ENCODE measurements at regions of chr1 and their contacts with region 1.

Region 1: GRCh38 chr1:117758444-117759316 is 152.8 kb downstream of the TENT5C start:
- DNase-seq: peak; percentile 75 to 81
- H3K4me3 ChIP-seq: no peak overlapping the region
- H3K4me3 Mint-ChIP-seq: peak overlapping the region; percentile 55
- H3K27ac Mint-ChIP-seq: peak overlapping the region; percentile 50
- H3K4me1 ChIP-seq: peaks cover 22% of the 10 kb centered on the region
- H3K4me1 Mint-ChIP-seq: peaks cover 34% of the 10 kb centered on the region
- H3K27me3 ChIP-seq: no peaks in the 10 kb centered on the region
- H3K27me3 Mint-ChIP-seq: no peaks in the 10 kb centered on the region
- CTCF ChIP-seq: peak; percentile 51 to 57

Region 2: GRCh38 chr1:117512743-117513321 is 245.8 kb before region 1 on chr1:
- CTCF ChIA-PET with region 1: interaction called, 4 read pairs
- POLR2A ChIA-PET with region 1: no interaction called
- intact Hi-C with region 1: loop called (anchors 1 kb)
- DNase-seq: peak in 1 of 2 experiments; percentile 19
- H3K4me3 ChIP-seq: no peak overlapping the region
- H3K4me3 Mint-ChIP-seq: no peak overlapping the region
- H3K27ac Mint-ChIP-seq: no peak overlapping the region
- H3K4me1 ChIP-seq: no peaks in the 10 kb centered on the region
- H3K4me1 Mint-ChIP-seq: no peaks in the 10 kb centered on the region
- H3K27me3 ChIP-seq: no peaks in the 10 kb centered on the region
- H3K27me3 Mint-ChIP-seq: no peaks in the 10 kb centered on the region
- CTCF ChIP-seq: peak; percentile 22 to 44

Region 3: DNA sequence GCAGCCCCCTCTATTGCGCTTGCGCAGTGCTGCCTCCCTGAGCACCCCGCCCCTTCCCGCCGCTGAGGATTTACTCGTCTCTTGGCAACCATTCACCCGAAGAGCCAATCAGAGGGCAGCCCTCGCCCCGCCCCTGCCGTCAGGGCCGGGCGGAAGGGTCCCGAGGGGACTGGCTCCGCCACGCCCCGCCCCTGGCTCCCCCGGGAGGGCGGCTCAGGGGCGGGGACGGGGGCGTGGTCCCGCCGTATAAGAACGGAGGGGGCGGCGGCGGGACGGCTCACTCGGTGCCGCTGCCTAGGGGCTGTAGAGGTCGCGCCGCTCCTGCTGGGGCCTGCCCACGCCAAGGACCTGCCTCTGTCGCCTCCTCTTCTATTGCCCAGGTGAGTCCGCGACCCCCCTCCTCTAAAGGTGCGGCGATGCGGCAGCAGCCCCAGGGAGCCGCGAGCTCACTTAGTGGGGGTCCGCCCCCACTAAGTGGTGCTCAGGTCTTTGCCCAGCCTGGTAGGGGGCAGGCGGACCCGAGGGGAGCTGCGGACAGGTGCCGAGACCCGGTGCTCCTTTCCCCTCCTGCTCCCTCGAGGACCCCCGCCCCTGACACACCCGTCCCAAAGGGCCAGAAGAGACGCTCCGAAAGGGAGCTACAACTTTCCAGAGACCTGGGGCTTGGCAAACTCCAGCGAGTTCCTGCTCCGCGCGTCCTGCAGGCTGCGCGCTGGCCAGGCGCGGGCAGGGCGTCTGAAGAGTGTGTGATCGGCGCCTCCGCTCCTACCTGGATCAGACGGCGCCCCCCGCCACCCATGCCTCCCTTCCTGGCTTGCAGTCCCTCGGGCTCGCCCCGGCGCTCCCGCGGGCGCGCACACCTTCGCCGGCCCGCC is 152.7 kb before region 1 on chr1 and contains the start of gene TENT5C:
- CTCF ChIA-PET with region 1: interaction called, 3 read pairs
- POLR2A ChIA-PET with region 1: no interaction called
- intact Hi-C with region 1: loop called (anchors 1 kb)
- DNase-seq: peak; percentile 95
- H3K4me3 ChIP-seq: peak within 1 kb of the TSS; percentile 78
- H3K4me3 Mint-ChIP-seq: peak within 1 kb of the TSS; percentile 86
- H3K27ac Mint-ChIP-seq: peak within 1 kb of the TSS; percentile 69
- H3K4me1 ChIP-seq: no peaks in the 10 kb centered on the region
- H3K4me1 Mint-ChIP-seq: peaks cover 22% of the 10 kb centered on the region
- H3K27me3 ChIP-seq: no peaks in the 10 kb centered on the region
- H3K27me3 Mint-ChIP-seq: no peaks in the 10 kb centered on the region
- CTCF ChIP-seq: peak in 1 of 2 experiments; percentile 2
- total RNA-seq, gene TENT5C: 19.8 and 24.4 TPM in 2 replicates

Region 4: DNA sequence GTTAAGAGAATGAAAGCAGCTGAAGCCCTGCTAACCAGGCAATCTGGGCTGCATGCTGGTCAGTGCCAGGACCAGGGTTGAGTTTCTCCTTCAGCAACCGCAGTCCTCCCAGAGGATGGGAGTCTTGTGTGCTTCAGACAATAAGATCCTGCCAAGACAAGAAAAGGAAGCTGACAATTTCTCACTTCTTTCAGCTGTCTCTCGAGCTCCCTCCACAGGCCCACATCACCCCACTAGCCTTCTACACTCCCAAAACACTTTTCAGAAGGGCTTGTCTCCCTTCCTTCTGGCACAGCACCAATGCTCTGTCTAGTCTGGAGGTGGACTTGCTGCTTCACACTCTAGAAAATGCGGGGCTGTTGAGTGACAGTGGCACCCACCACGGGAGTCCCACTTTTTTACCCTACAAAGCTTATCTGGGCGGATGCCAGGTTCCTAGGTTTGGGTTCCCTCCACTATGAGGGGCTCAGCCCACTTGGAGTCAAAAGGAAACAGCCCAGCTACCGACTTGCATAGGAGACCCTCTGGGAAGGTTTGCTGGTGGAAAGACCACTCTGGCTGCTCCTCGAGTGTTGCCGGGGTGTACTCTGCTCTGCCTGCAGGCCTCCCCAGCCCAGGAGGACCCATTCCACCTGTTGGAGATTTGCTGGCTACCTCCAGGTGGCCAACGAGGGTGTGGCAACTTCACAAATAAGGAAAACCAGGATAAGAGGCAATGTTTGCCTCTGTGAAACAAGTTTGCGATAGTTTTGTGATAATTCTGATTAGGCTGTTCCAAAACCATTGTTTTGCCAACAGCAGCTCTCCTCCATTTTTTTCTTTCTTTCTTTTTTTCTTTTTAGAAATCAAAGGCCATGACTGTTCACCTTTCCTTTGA is 83.9 kb before region 1 on chr1:
- CTCF ChIA-PET with region 1: interaction called, 17 read pairs
- POLR2A ChIA-PET with region 1: interaction called, 3 read pairs
- intact Hi-C with region 1: loop called (anchors 1 kb)
- DNase-seq: peak; percentile 65 to 69
- H3K4me3 ChIP-seq: no peak overlapping the region
- H3K4me3 Mint-ChIP-seq: no peak overlapping the region
- H3K27ac Mint-ChIP-seq: peak overlapping the region; percentile 83
- H3K4me1 ChIP-seq: peaks cover 40% of the 10 kb centered on the region
- H3K4me1 Mint-ChIP-seq: peaks cover 18% of the 10 kb centered on the region
- H3K27me3 ChIP-seq: no peaks in the 10 kb centered on the region
- H3K27me3 Mint-ChIP-seq: no peaks in the 10 kb centered on the region
- CTCF ChIP-seq: peak in 1 of 2 experiments; percentile 16

Region 5: DNA sequence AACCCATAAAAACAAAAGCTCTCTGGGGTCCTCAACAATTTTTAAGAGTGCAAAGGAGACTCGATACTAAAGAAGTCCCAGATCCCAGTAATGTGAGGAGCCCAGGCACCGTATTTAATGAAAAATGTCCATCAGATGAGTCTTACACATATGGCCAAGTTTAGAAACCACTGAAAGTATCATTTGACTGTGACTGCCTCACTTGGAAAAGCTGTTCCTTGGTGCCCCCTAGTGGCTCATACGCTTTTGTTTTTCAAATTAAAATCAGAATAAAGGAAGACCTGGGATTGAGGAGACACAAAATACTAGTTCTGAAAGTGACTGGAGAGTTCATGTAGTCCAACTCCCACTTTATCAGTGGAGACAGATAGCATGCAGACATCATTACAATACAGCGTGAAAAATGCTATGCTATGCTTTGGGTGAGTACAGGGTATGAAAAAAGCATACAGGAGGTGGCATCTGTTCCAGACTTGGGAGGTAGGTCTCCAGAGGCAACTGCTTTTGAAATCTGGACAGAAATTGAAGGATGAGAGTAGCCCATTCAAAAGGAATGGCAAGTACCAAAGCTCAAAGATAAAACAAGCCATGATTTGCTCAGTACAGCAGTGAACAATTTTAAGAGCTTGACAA is 136.9 kb after region 1 on chr1:
- CTCF ChIA-PET with region 1: no interaction called
- POLR2A ChIA-PET with region 1: no interaction called
- intact Hi-C with region 1: loop called (anchors 10 kb)
- DNase-seq: peak; percentile 38 to 69
- H3K4me3 ChIP-seq: no peak overlapping the region
- H3K4me3 Mint-ChIP-seq: no peak overlapping the region
- H3K27ac Mint-ChIP-seq: no peak overlapping the region
- H3K4me1 ChIP-seq: no peaks in the 10 kb centered on the region
- H3K4me1 Mint-ChIP-seq: no peaks in the 10 kb centered on the region
- H3K27me3 ChIP-seq: no peaks in the 10 kb centered on the region
- H3K27me3 Mint-ChIP-seq: no peaks in the 10 kb centered on the region
- CTCF ChIP-seq: peak; percentile 55 to 56